ENCODE measurements at regions of chr16 and their contacts with region 1.

Region 1: GRCh38 chr16:69538808-69539207 is 27.0 kb upstream of the NFAT5 start:
- DNase-seq: no peak
- H3K4me3 Mint-ChIP-seq: no peak overlapping the region
- H3K27ac Mint-ChIP-seq: no peak overlapping the region
- H3K4me1 Mint-ChIP-seq: no peaks in the 10 kb centered on the region
- H3K27me3 Mint-ChIP-seq: no peaks in the 10 kb centered on the region

Region 2: GRCh38 chr16:69443927-69444631 is 94.7 kb before region 1 on chr16:
- CTCF ChIA-PET with region 1: no interaction called
- POLR2A ChIA-PET with region 1: interaction called, 11 read pairs
- DNase-seq: peak; percentile 35
- H3K4me3 Mint-ChIP-seq: peak overlapping the region; percentile 77
- H3K27ac Mint-ChIP-seq: peak overlapping the region; percentile 99
- H3K4me1 Mint-ChIP-seq: peaks cover 42% of the 10 kb centered on the region
- H3K27me3 Mint-ChIP-seq: no peaks in the 10 kb centered on the region

Region 3: GRCh38 chr16:69526831-69527655 is 11.8 kb before region 1 on chr16:
- CTCF ChIA-PET with region 1: no interaction called
- POLR2A ChIA-PET with region 1: no interaction called
- DNase-seq: no peak
- H3K4me3 Mint-ChIP-seq: no peak overlapping the region
- H3K27ac Mint-ChIP-seq: no peak overlapping the region
- H3K4me1 Mint-ChIP-seq: peaks cover 15% of the 10 kb centered on the region
- H3K27me3 Mint-ChIP-seq: no peaks in the 10 kb centered on the region

Region 4: DNA sequence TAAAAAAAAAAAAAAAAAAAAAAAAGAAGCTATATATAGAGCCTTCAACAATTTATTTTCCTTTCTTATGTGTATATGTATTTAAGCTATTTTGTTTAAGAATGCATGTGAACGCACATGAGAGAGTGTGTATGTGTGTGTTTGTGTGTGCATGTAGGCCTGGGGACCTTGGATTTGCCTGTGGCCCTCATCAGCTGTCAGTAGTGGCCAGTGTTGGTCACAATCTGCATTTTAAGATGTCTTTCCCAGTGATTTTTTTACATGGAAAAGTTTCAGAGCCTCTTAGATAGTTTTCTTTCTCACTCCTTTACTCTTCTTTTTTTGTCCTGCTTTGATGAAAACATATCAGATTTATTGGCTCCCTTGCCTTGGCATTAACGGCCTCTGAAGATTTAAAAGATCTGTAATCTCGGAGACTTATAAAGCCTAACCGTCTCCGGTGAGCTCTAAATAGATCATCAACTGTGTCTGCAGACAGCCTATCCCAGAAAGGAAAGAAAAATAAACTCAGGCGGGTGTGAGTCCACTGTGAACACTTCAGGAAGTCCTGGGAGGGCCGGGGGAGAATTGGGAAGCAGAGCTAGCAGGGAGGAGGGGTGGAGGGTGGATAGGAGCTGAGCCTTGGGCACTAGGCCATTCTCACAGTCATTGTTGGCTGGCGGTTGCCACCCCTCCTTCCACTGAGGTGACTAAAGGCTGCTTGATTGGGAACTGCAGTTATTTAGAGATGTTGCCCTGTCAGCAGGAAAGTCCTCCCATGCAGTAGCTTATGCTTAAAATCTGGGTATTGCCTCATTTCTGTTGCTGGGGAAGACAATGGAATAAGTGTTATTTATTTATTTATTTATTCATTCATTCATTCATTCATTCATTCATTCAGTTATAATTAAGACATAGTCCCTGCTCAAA is 310.1 kb after region 1 on chr16:
- CTCF ChIA-PET with region 1: no interaction called
- POLR2A ChIA-PET with region 1: no interaction called
- DNase-seq: no peak
- H3K4me3 Mint-ChIP-seq: no peak overlapping the region
- H3K27ac Mint-ChIP-seq: no peak overlapping the region
- H3K4me1 Mint-ChIP-seq: no peaks in the 10 kb centered on the region
- H3K27me3 Mint-ChIP-seq: no peaks in the 10 kb centered on the region

Measured in activated CD4-positive, alpha-beta T cell treated with anti-CD3 and anti-CD28 coated beads, Interleukin-2, amount 10 ng/mL, durations not matched to agents 7 days and 5 days (primary cell).